ENCODE measurements at regions of chr2 and their contacts with region 1.

Region 1: DNA sequence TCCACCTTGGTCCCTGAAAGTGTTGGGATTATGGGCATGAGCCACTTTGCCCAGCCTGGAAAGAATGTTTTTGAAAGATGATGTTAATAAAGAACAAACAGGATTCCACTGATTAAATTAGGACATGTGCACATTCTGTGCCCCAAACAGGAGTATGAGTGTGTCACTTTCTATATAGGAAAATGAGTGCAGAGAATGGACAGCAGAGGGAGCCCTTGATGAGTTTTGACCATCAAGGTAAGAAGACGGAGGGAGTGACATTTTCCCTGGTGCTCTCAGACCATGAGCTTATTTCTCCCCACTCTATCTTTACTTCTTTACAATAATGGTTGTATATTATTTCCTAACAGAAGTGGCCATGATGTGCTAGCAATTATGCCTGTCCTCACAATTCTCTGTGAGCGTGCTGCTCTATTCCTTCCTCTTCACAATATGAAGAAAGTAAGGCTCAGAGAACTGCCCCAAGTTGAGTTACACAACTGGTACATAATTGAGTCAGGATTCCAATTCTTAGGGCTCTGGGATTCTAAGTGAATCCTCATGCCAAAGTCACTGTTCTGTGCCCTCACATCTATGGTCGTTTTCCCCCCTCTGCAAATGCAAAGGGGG is 20.6 kb downstream of the RPL37A start:
- DNase-seq: peak; percentile 89
- ATAC-seq: peak; percentile 85
- H3K4me3 ChIP-seq: no peak overlapping the region
- H3K27ac ChIP-seq: no peak overlapping the region
- H3K4me1 ChIP-seq: peaks cover 7% of the 10 kb centered on the region
- H3K27me3 ChIP-seq: no peaks in the 10 kb centered on the region
- CTCF ChIP-seq: peak; percentile 80
- POLR2A ChIP-seq: no peak
- RAD21 ChIP-seq: peak; percentile 86

Region 2: DNA sequence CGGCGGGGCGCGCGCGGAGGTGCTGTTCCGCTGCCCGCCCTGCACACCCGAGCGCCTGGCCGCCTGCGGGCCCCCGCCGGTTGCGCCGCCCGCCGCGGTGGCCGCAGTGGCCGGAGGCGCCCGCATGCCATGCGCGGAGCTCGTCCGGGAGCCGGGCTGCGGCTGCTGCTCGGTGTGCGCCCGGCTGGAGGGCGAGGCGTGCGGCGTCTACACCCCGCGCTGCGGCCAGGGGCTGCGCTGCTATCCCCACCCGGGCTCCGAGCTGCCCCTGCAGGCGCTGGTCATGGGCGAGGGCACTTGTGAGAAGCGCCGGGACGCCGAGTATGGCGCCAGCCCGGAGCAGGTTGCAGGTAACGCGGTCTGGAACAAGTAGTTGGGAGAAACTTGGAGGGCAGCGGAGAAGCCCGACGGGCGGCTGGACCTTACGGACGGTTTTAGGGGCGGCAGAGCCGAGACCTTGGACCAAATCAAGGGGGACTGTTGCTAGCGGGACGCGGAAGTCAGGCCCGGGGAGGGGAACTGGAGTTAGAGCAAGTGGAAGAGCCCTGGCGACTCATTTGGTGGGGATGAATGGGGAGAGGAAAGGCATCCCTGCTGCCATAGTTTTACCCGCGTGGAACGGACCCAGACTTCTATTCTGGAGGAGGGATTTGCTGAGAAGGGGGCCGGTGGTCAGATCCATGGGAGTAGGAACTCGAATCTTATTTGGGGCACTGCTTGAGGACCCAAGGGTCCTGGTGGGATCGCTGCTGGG is 114.5 kb after region 1 on chr2:
- CTCF ChIA-PET with region 1: no interaction called
- POLR2A ChIA-PET with region 1: no interaction called
- dilution Hi-C with region 1: no loop called
- in situ Hi-C with region 1: no loop called
- intact Hi-C with region 1: loop called (anchors 1 kb)
- DNase-seq: no peak
- ATAC-seq: peak; percentile 50
- H3K4me3 ChIP-seq: peak overlapping the region; percentile 48
- H3K27ac ChIP-seq: no peak overlapping the region
- H3K4me1 ChIP-seq: peaks cover 4% of the 10 kb centered on the region; the same call in 1 of the 2 replicates
- H3K27me3 ChIP-seq: peaks cover 35% of the 10 kb centered on the region
- CTCF ChIP-seq: no peak
- POLR2A ChIP-seq: no peak
- RAD21 ChIP-seq: no peak

Region 3: DNA sequence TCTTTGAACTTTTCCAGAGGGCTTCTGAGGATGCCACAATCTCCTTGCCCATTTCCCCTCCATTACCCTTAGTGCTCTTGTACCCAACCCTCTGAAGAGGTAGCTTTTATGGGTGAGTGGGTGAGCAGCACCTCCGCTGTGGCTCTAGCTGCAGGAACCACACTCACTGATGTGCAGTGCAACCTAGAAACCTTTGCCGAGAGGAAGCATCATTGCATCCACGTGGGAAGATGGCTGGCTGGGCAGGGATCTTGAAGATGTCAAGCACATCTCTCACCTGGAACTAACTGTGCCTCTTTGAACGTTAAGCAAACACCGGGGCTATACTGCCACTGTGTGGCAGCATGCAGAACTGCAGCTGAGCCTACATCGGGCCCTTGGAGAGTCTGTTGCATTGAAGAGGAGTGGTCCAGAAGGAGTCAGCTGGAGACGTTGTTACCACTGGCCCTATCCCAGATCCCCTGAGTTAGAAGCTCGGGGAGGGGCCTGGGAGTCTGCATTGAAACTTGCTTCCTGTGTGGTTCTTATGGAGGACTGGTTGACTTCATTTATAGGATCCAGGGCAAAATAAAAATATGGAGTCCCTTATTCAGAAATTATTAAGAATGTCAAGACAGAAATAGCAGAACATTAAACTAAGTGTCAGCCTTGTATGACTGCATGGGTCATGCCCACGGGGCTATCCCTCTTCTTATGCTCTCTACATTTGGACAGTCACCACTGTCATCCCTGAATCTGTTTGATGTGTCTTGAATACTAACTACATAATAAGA is 147.4 kb after region 1 on chr2:
- CTCF ChIA-PET with region 1: interaction called, 88 read pairs
- POLR2A ChIA-PET with region 1: no interaction called
- dilution Hi-C with region 1: loop called (anchors 25 kb)
- in situ Hi-C with region 1: loop called (anchors 5 kb)
- intact Hi-C with region 1: loop called (anchors 1 kb)
- DNase-seq: peak; percentile 71
- ATAC-seq: peak; percentile 28
- H3K4me3 ChIP-seq: no peak overlapping the region
- H3K27ac ChIP-seq: no peak overlapping the region
- H3K4me1 ChIP-seq: no peaks in the 10 kb centered on the region; the same call in 1 of the 2 replicates
- H3K27me3 ChIP-seq: no peaks in the 10 kb centered on the region
- CTCF ChIP-seq: peak; percentile 97
- POLR2A ChIP-seq: peak; percentile 71
- RAD21 ChIP-seq: peak; percentile 99

Region 4: DNA sequence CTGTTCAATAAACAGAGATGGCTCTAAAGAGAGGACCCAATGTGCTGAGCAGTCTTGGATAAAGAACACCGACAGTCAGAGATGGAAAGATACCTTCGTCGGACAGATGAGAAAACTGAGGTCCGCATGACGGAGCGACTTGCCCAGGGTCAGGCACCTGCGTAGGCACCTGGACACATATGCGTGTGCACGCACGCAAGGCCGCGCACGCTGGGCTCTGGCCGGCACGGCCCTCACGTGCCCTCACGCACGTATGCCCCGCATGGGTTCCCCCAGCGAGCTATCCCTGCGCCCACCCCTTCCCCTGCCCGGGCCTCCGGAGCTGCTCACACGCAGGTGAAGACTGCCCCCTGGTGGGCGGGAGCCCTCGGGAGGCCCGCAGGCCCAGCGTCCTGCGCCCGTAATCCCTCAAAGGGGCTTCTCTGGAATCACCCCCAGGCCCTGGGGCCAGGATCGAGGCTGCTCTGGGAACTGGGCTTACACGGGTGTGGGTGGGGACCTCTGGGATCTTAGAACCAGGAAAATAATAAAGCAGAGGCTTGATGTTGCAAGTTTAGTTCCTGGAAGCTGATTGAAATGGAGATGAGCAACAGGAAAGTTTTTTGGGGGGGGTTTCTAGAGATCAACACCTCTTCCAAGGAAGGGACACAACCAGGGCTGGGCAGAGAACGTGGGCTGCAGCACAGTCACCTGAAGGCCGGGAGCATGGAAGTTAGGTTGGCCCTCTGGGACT is 1237.3 kb after region 1 on chr2:
- CTCF ChIA-PET with region 1: no interaction called
- POLR2A ChIA-PET with region 1: no interaction called
- dilution Hi-C with region 1: no loop called
- in situ Hi-C with region 1: loop called (anchors 10 kb)
- intact Hi-C with region 1: loop called (anchors 5 kb)
- DNase-seq: peak; percentile 64
- ATAC-seq: peak; percentile 94
- H3K4me3 ChIP-seq: no peak overlapping the region
- H3K27ac ChIP-seq: peak overlapping the region; percentile 29; the same call in 1 of the 2 replicates
- H3K4me1 ChIP-seq: peaks cover 10% of the 10 kb centered on the region
- H3K27me3 ChIP-seq: no peaks in the 10 kb centered on the region
- CTCF ChIP-seq: peak; percentile 78
- POLR2A ChIP-seq: no peak
- RAD21 ChIP-seq: peak; percentile 82